Left cardiac atrium (tissue), 4 donors: ENCODE measurements at regions of chr14 and their contacts with region 1.

Region 1: DNA sequence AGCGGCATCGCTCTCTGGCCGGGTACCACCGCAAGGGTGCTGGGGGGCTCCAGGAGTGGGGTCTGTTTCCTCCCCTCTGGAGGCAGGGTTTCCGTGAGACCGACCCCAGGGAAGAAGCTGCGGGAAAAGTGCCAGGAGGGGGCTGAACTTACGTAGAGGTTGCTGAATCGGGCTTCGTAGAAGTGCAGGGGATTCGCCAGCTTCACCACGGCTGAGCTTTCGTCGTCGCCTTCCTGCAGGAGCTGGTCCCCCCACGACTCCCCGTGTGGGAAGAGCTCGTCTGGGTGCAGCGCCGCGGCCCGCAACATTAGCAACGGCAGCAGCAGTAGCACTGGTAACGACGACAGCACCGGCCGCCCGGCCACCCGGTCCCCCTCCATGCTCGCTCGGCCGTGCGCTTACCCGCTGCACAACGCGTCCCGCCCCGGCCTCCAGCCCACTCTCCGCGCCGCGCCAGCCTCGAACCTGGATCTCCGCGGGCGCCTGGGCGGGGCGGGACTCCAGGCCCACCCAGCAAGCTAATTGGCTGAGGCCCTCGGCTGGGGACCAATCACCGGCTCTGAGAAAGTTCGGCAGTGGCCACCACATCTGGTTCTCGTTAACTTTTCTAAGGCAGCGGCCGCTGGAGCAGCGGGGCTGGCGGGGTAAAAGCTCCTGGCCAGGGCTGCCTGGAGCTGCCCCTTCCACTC is at the start of gene NID2:
- DNase-seq: peak; percentile 89
- ATAC-seq: peak; percentile 94 to 95
- total RNA-seq, gene NID2: 29.4 to 42.1 TPM

Region 2: DNA sequence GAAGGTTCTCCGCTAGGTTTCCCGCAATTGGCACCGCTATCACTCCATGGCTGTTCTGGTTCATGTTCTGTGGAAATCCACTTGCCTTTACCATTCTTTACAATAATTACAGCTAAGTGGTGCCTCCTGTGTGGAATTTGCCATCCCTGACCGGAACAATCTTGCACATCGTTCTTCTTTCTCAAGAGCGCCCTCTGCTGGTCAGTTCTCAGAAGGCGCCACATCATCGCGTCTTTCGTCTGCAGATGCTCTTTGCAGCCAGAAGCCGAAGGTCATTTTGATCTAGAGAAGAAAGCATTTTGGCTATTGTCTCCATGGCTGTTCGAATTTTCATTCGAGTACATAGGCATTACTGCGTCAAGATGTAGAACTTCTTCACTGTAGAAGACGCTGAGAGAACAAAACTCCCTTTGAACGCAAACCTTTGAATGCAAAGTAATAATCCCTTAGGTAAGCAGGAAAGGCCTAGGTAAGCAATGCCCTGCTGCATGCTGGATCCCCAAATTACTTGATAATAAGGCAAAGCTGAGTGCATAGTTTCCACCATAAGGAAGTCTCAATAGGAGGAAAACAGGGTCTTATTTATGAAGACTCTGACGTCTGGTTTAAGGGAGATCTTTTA is 89.6 kb before region 1 on chr14:
- intact Hi-C with region 1: no loop called
- DNase-seq: peak; percentile 82
- ATAC-seq: peak; percentile 79 to 81

Region 3: DNA sequence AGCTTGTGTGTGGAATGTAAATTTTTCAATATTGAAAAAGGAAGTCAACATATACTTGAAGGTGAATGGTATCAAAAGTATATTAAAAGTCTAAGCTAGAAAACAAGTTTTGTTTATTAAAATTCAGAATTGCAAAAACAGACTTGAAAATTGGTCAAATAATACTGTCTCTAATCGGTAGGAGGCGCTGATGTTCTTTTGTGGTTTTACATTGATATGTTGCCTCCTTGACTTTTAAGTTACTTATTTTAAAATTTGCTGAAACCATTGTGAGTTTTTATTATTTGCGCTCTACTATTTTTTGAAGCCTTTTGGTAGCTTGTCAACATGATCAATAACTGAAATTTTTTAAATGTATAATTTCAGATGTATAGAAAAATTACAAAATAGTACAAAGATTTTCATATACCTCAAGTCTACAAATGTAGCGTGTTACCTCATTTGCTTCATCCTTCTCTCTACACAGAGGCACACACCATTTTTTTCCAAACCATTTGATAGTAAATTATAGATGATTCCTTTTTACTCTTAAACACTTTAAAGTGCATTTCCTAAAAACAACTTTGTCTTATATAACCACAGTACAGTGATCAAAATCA is 72.5 kb before region 1 on chr14:
- intact Hi-C with region 1: loop called (anchors 5 kb)
- DNase-seq: no peak
- ATAC-seq: no peak

Region 4: DNA sequence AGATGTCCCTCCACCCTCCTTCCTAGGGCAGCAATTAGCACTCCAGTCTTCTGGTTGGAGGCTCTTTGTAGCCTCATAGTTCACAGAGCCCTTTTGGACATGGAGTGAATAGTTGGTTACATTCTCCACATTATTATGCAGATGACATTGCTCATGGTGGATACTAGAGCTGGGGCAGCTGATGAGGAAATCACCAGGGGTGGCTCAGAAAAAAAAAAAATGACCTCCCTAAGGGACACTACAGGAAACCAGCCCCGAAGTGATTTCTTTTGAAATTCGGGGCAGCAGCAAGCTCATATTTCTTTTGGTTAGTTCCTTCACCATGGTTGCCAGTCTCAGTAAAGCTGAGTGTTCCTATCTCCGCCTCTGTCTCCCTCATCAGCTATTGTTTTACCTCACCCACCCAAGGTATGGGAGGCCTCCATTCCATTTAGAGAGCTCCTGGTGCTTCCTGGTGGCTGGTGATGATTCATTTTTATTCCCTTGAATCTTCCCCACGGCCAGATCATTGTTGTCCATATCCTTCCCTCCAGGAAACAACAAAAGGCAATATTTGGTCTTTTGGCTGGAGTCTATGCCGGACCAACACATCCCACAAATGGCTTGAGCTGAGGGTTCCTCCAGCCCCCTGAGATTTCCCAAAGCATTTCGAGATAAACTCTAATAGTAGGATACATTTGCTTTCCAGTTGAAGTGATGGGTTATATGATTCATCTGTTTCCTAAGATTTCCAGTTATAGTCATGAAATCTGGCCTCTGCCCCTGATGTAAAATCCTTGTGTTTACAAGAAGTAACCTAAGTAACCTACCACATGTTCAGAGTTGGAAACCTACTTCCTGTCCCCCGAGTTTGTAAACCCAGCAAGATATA is 56.3 kb after region 1 on chr14:
- intact Hi-C with region 1: loop called (anchors 5 to 10 kb)
- DNase-seq: no peak
- ATAC-seq: peak; percentile 75 to 76

Region 5: GRCh38 chr14:52131640-52132320 is 63.0 kb after region 1 on chr14:
- intact Hi-C with region 1: loop called (anchors 5 to 10 kb)
- DNase-seq: peak; percentile 84
- ATAC-seq: peak; percentile 92

Region 6: GRCh38 chr14:52220924-52221811 is 152.4 kb after region 1 on chr14:
- intact Hi-C with region 1: no loop called
- DNase-seq: no peak
- ATAC-seq: peak in 1 of 2 donors; percentile 5

Region 7: GRCh38 chr14:52241087-52241793 is 172.5 kb after region 1 on chr14:
- intact Hi-C with region 1: no loop called
- DNase-seq: no peak
- ATAC-seq: no peak

Region 8: GRCh38 chr14:52974406-52974805 is 905.6 kb after region 1 on chr14:
- intact Hi-C with region 1: no loop called
- DNase-seq: no peak
- ATAC-seq: no peak